Right ventricle myocardium superior (tissue), 1 donor: ENCODE measurements at regions of chr20 and their contacts with region 1.

Region 1: GRCh38 chr20:20666359-20666758 is 46.1 kb downstream of the RALGAPA2 start:
- DNase-seq: no peak
- ATAC-seq: no peak

Region 2: GRCh38 chr20:20017001-20017843 is 649.1 kb before region 1 on chr20 and contains the start of gene NAA20:
- intact Hi-C with region 1: no loop called
- DNase-seq: peak; percentile 96
- ATAC-seq: peak; percentile 100
- total RNA-seq, gene NAA20: 59.2 TPM

Region 3: DNA sequence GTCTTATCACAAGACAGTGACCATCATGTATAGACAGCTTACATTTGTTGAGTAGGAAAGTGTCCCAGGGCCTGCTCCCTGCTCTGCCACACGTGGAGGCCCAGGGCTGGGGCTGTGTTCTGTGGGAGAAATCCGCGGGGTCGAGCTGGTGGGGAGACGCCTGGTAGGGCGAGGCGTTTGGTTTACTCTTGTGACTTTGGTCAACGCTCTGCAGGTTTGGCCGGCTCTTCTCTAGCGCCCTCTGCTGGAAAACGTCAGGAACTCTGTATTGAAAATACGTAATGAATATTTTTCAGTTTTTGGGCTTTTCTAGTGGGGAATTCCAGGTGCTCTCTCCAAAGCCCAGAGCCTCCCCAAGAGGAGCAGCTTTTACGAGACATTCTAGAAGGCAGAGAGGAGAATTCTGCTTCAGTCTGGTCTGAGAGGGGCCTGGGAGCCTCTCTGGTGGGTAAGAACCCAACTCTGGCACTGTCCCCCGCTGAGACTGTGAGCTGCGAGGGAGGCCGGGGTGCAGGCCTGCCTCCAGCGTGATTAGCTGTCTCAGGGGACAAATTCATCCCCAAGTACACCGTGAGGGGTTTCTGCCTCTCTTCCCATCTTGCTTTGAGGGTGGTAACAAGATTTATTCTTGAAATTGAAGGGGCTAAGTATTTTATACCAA is 158.7 kb after region 1 on chr20:
- intact Hi-C with region 1: loop called (anchors 2 kb)
- DNase-seq: peak; percentile 56
- ATAC-seq: peak; percentile 79